ENCODE measurements at regions of chr6 and their contacts with region 1.

Region 1: GRCh38 chr6:157861814-157862213 is 38.8 kb downstream of the SNX9 start:
- DNase-seq: no peak
- H3K4me3 Mint-ChIP-seq: no peak overlapping the region
- H3K27ac Mint-ChIP-seq: no peak overlapping the region
- H3K4me1 Mint-ChIP-seq: peaks cover 36% of the 10 kb centered on the region
- H3K27me3 Mint-ChIP-seq: peaks cover 47% of the 10 kb centered on the region

Region 2: GRCh38 chr6:157800420-157801237 is 61.2 kb before region 1 on chr6:
- intact Hi-C with region 1: loop called (anchors 1 kb)
- DNase-seq: no peak
- H3K4me3 Mint-ChIP-seq: no peak overlapping the region
- H3K27ac Mint-ChIP-seq: peak overlapping the region; percentile 21
- H3K4me1 Mint-ChIP-seq: peaks cover 42% of the 10 kb centered on the region
- H3K27me3 Mint-ChIP-seq: peaks cover 54% of the 10 kb centered on the region

Region 3: DNA sequence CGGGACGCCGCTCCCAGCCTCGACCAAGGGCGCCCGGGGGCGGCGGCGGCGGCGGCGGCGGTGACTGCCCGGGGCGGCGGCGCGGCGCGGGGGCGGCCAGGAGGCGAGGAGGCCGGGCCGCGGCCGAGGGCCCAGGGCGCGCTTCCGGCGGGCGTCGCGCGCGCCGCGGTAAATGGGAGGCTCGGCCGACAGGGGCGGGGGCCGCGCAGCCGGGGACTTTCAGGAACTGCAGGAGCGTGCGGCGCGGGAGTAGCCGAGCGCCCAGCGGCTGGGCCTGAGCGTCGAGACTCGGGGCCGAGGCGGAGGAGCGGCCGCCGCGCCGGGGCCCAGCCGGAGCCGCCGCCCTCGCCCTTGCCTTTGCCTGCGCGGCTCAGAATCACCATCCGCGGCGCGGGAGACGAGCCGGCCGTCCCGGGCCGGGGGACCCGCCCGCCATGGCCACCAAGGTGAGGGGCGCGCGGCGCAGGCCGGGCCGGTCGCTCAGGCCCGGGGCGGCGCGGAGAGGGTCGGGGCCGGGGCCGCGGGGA is 38.8 kb before region 1 on chr6 and contains the start of gene SNX9:
- intact Hi-C with region 1: loop called (anchors 2 kb)
- DNase-seq: peak; percentile 42
- H3K4me3 Mint-ChIP-seq: peak within 1 kb of the TSS; percentile 92
- H3K27ac Mint-ChIP-seq: peak within 1 kb of the TSS; percentile 96
- H3K4me1 Mint-ChIP-seq: peaks cover 30% of the 10 kb centered on the region
- H3K27me3 Mint-ChIP-seq: peaks cover 35% of the 10 kb centered on the region
- total RNA-seq, gene SNX9: 55.3 and 55.6 TPM in 2 replicates

Region 4: GRCh38 chr6:157830354-157831017 is 31.3 kb before region 1 on chr6:
- intact Hi-C with region 1: loop called (anchors 1 kb)
- DNase-seq: no peak
- H3K4me3 Mint-ChIP-seq: no peak overlapping the region
- H3K27ac Mint-ChIP-seq: peak overlapping the region; percentile 36
- H3K4me1 Mint-ChIP-seq: peaks cover 50% of the 10 kb centered on the region
- H3K27me3 Mint-ChIP-seq: peaks cover 1% of the 10 kb centered on the region

Region 5: DNA sequence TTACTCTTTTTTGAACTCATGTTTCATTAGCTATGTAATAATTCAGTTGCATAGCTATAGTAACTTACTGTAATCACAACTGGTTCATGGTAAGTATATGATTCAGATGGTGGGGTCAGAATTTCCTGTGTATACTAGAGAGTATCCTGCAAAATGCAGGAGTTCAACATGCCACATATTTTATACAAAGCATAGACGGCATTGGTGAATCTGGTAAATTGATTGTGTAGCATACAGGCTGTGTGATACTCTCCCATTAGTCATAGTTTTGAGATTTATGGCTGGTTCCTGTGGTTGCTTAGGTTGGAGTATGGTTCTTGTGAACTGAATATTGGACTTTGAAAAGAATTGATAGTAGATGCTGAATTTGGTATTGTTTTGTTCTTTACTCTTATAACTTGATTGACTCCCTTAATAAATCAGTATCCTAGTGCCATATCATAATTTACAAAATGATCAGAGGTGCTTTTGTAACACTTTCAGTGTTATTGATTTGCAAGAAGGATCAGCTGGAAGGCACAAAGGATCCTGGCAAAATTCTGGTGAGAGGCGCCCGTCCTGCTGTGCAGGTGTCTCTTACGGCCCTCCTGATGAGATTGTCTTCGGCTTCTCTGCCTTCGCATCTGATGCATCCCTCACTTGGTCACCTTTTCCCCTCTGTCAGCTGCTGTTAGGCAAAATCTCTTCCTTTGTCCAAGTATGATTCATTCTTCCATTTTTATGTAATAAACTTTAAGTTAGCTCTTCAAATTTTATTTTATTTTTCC is 16.1 kb before region 1 on chr6:
- intact Hi-C with region 1: loop called (anchors 1 kb)
- DNase-seq: no peak
- H3K4me3 Mint-ChIP-seq: no peak overlapping the region
- H3K27ac Mint-ChIP-seq: peak overlapping the region; percentile 20
- H3K4me1 Mint-ChIP-seq: peaks cover 43% of the 10 kb centered on the region
- H3K27me3 Mint-ChIP-seq: peaks cover 14% of the 10 kb centered on the region

Region 6: GRCh38 chr6:157885211-157885788 is 23.5 kb after region 1 on chr6:
- intact Hi-C with region 1: loop called (anchors 1 kb)
- DNase-seq: peak; percentile 37
- H3K4me3 Mint-ChIP-seq: no peak overlapping the region
- H3K27ac Mint-ChIP-seq: peak overlapping the region; percentile 86
- H3K4me1 Mint-ChIP-seq: peaks cover 55% of the 10 kb centered on the region
- H3K27me3 Mint-ChIP-seq: peaks cover 11% of the 10 kb centered on the region

Measured in activated T-helper 2 cell treated with anti-CD3 and anti-CD28 coated beads, Interferon-gamma antibody, Interleukin-2, Interleukin-4, amounts not matched to agents 10 μg/mL and 5 μg/mL and 100 μg/mL, durations not matched to agents 14 hours and 24 hours and 36 hours (primary cell).